ENCODE measurements at regions of chr20 and their contacts with region 1.

Region 1: DNA sequence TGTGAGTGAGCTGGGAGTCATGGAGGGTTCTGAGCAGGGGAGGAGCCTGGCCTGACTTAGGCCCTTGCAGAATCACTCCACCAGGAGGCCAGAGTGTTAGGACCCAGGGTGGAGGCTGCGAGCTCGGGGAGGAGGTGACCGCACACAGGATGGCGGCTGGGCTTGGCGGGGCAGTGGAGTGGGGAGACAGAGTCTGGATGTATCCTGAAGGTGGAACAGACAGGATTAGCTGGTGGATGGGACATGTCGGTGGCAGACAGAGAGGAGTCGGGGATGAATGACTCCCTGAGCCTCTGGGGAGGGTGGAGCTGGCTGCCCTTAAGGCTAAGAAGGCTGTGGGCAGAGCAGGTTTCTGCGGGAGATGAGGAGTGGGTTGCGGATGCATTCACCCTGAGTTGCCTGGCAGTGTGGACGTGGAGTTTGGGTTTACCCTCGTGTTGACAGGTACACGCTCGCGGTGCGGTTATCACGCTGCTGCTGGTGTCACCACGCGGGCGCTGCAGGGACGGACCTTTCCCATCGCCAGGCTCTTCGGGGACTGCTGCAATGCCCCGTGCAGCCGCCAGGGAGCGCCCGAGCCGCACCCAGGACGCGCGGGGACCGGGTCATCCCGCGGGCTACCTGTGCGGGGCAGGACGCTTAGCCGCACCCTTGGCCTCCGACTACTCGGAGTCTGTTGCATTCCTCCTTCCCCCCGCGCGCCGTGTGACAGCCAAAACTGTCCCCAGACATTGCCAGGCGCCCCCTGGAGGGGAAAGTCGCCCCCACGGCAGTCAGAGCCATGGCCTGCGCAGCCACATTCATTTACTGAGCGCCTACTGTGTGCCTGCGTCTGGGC is 43.0 kb upstream of the PTGIS start:
- DNase-seq: peak; percentile 92 to 98
- ATAC-seq: peak; percentile 87 to 92
- H3K4me3 ChIP-seq: peak overlapping the region; percentile 52
- H3K27ac ChIP-seq: peak overlapping the region; percentile 85 to 88
- H3K4me1 ChIP-seq: peaks cover 27% of the 10 kb centered on the region
- CTCF ChIP-seq: peak; percentile 97
- EP300 ChIP-seq: no peak
- POLR2A ChIP-seq: peak; percentile 54
- RAD21 ChIP-seq: peak; percentile 97 to 100

Region 2: GRCh38 chr20:49328790-49329189 is 282.1 kb before region 1 on chr20:
- CTCF ChIA-PET with region 1: interaction called, 27 read pairs
- POLR2A ChIA-PET with region 1: no interaction called
- DNase-seq: no peak
- ATAC-seq: no peak
- H3K4me3 ChIP-seq: no peak overlapping the region
- H3K27ac ChIP-seq: no peak overlapping the region
- H3K4me1 ChIP-seq: no peaks in the 10 kb centered on the region
- CTCF ChIP-seq: no peak
- EP300 ChIP-seq: no peak
- POLR2A ChIP-seq: no peak
- RAD21 ChIP-seq: no peak

Region 3: GRCh38 chr20:49541733-49542513 is 69.0 kb before region 1 on chr20:
- CTCF ChIA-PET with region 1: interaction called, 546 read pairs
- POLR2A ChIA-PET with region 1: interaction called, 3 read pairs
- DNase-seq: peak; percentile 81 to 87
- ATAC-seq: peak; percentile 73 to 87
- H3K4me3 ChIP-seq: no peak overlapping the region
- H3K27ac ChIP-seq: peak overlapping the region; percentile 48 to 61; a peak in 5 of 6 replicates
- H3K4me1 ChIP-seq: 0 out of 3 replicates have a peak, but pooled peaks cover 5% of the 10 kb centered on the region
- CTCF ChIP-seq: peak; percentile 98
- EP300 ChIP-seq: no peak
- POLR2A ChIP-seq: no peak
- RAD21 ChIP-seq: peak; percentile 98

Region 4: GRCh38 chr20:49583669-49584417 is 27.1 kb before region 1 on chr20:
- CTCF ChIA-PET with region 1: interaction called, 115 read pairs
- POLR2A ChIA-PET with region 1: no interaction called
- DNase-seq: peak; percentile 82 to 95
- ATAC-seq: peak; percentile 87 to 92
- H3K4me3 ChIP-seq: no peak overlapping the region
- H3K27ac ChIP-seq: peak overlapping the region; percentile 84 to 88
- H3K4me1 ChIP-seq: peaks cover 52% of the 10 kb centered on the region
- CTCF ChIP-seq: no peak
- EP300 ChIP-seq: peak; percentile 86 to 87; a peak in 4 of 5 replicates
- POLR2A ChIP-seq: no peak
- RAD21 ChIP-seq: peak in 1 of 2 experiments; percentile 22; a peak in 2 of 5 replicates

Region 5: GRCh38 chr20:49668181-49668877 is 57.4 kb after region 1 on chr20:
- CTCF ChIA-PET with region 1: interaction called, 13 read pairs
- POLR2A ChIA-PET with region 1: no interaction called
- DNase-seq: no peak
- ATAC-seq: no peak; a peak in 1 of 6 replicates
- H3K4me3 ChIP-seq: no peak overlapping the region
- H3K27ac ChIP-seq: peak overlapping the region in 1 of 2 experiments; percentile 56; a peak in 3 of 6 replicates
- H3K4me1 ChIP-seq: peaks cover 94% of the 10 kb centered on the region
- CTCF ChIP-seq: no peak
- EP300 ChIP-seq: no peak
- POLR2A ChIP-seq: no peak
- RAD21 ChIP-seq: no peak

Region 6: GRCh38 chr20:49712996-49713752 is 102.3 kb after region 1 on chr20:
- CTCF ChIA-PET with region 1: interaction called, 33 read pairs
- POLR2A ChIA-PET with region 1: no interaction called
- DNase-seq: peak in 1 of 2 experiments; percentile 27
- ATAC-seq: peak; percentile 68 to 81
- H3K4me3 ChIP-seq: peak overlapping the region; percentile 84
- H3K27ac ChIP-seq: peak overlapping the region; percentile 97 to 98
- H3K4me1 ChIP-seq: peaks cover 56% of the 10 kb centered on the region
- CTCF ChIP-seq: no peak
- EP300 ChIP-seq: peak in 1 of 2 experiments; percentile 12; a peak in 1 of 5 replicates
- POLR2A ChIP-seq: no peak
- RAD21 ChIP-seq: no peak

Region 7: DNA sequence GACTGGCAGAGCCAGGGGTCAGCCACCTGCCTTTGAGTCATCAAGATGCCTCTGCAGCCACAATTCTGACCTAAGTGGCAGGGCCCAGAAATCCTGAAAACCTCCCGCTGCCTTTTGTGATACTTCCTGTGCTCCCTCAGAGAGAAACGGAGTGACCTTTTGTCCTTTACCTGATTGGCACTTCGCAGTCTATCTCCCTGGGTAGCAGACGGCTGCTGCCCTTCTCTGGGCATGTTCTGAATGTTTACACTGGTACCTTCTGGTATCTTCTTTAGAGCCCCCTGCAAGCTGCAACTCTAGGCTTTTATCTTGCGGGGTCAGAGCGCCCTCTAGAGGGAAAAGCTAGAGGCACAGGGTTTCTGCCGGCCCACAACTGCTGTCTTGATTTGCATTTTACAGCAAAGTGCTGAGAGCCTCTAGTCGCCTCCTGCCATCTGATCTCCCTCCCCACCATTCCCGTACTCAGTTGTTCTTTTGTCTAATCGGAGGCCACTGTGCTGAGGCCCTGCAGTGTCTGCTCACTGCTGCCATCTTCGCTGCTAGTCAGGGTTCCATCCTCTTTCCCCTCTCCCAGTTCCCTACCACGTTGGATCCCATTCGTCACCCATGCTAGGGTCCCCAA is 277.5 kb after region 1 on chr20:
- CTCF ChIA-PET with region 1: interaction called, 226 read pairs
- POLR2A ChIA-PET with region 1: interaction called, 3 read pairs
- DNase-seq: peak; percentile 66 to 77
- ATAC-seq: peak; percentile 56 to 81; a peak in 5 of 6 replicates
- H3K4me3 ChIP-seq: no peak overlapping the region
- H3K27ac ChIP-seq: peak overlapping the region in 1 of 2 experiments; percentile 71; a peak in 3 of 6 replicates
- H3K4me1 ChIP-seq: peaks cover 18% of the 10 kb centered on the region
- CTCF ChIP-seq: peak; percentile 93
- EP300 ChIP-seq: no peak
- POLR2A ChIP-seq: no peak
- RAD21 ChIP-seq: peak; percentile 87 to 89

Region 8: GRCh38 chr20:50215101-50215690 is 604.3 kb after region 1 on chr20:
- CTCF ChIA-PET with region 1: no interaction called
- POLR2A ChIA-PET with region 1: no interaction called
- DNase-seq: no peak
- ATAC-seq: no peak
- H3K4me3 ChIP-seq: no peak overlapping the region
- H3K27ac ChIP-seq: peak overlapping the region in 1 of 2 experiments; percentile 29; a peak in 1 of 6 replicates
- H3K4me1 ChIP-seq: peaks cover under 1% of the 10 kb centered on the region; the same call in 1 of the 3 replicates
- CTCF ChIP-seq: no peak
- EP300 ChIP-seq: no peak
- POLR2A ChIP-seq: no peak
- RAD21 ChIP-seq: no peak

Measured in A549 (cell line).